ENCODE measurements at regions of chr13 and their contacts with region 1.

Region 1: DNA sequence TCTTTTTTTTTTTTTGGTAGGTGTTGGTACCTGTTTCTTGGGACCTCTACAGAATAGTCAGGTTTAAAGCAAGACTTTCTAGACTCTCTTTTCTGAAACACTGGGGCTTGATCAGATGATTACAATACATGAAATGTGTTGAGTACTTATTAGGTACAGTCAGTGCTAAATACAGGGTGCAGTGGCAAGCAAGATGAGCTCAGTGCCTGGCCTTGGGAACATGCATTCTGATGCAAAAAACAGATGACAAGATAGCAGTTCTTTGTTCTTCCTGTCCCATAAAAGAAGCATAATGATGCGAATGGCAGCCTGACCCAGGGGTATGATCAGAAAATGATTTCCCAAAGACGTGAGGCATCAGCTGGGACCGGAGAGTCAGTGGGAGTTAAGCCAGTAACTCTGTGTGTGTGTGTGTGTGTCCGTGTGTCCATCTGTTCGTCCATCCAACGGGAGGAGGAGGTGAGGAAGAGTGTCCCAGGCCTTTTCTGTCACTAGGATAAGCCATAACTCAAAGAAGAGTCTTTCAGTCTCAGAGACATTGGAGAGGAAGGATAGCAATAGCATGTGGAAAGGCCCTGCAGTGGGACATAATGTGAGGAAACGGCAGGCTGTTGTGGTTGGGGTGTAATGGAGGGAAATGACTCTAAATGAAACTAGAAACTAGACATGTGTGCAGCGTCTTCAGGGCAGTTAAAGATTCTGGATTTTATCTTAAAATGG is 32.2 kb downstream of the SLAIN1 start:
- DNase-seq: no peak
- ATAC-seq: no peak
- H3K4me3 ChIP-seq: no peak overlapping the region
- H3K27ac ChIP-seq: no peak overlapping the region
- H3K4me1 ChIP-seq: peaks cover 0 to 19% (median 8%) of the 10 kb centered on the region in 9 donors
- H3K27me3 ChIP-seq: no peaks in the 10 kb centered on the region
- CTCF ChIP-seq: no peak

Region 2: GRCh38 chr13:77599351-77599750 is 130.3 kb before region 1 on chr13:
- intact Hi-C with region 1: loop called in 1 of 10 experiments (anchors 10 kb)
- DNase-seq: no peak
- ATAC-seq: no peak
- H3K4me3 ChIP-seq: no peak overlapping the region
- H3K27ac ChIP-seq: no peak overlapping the region
- H3K4me1 ChIP-seq: no peaks in the 10 kb centered on the region
- H3K27me3 ChIP-seq: peaks cover 0 to 14% (median 0%) of the 10 kb centered on the region in 7 donors
- CTCF ChIP-seq: no peak

Region 3: GRCh38 chr13:77678691-77679267 is 50.9 kb before region 1 on chr13:
- intact Hi-C with region 1: no loop called
- DNase-seq: no peak
- ATAC-seq: no peak
- H3K4me3 ChIP-seq: no peak overlapping the region
- H3K27ac ChIP-seq: no peak overlapping the region
- H3K4me1 ChIP-seq: no peaks in the 10 kb centered on the region
- H3K27me3 ChIP-seq: peaks cover 0 to 18% (median 5%) of the 10 kb centered on the region in 7 donors
- CTCF ChIP-seq: no peak